ENCODE measurements at regions of chr1 and their contacts with region 1.

Region 1: GRCh38 chr1:236603991-236604904 is at the start of gene HEATR1:
- DNase-seq: peak; percentile 91
- H3K4me3 ChIP-seq: peak within 1 kb of the TSS; percentile 88
- H3K27ac ChIP-seq: peak within 1 kb of the TSS; percentile 8
- H3K4me1 ChIP-seq: peaks cover 14% of the 10 kb centered on the region
- CTCF ChIP-seq: 0 out of 2 replicates have a peak, but pooled peaks have one; percentile 6
- total RNA-seq, gene HEATR1: 30.5 and 34.4 TPM in 2 replicates

Region 2: DNA sequence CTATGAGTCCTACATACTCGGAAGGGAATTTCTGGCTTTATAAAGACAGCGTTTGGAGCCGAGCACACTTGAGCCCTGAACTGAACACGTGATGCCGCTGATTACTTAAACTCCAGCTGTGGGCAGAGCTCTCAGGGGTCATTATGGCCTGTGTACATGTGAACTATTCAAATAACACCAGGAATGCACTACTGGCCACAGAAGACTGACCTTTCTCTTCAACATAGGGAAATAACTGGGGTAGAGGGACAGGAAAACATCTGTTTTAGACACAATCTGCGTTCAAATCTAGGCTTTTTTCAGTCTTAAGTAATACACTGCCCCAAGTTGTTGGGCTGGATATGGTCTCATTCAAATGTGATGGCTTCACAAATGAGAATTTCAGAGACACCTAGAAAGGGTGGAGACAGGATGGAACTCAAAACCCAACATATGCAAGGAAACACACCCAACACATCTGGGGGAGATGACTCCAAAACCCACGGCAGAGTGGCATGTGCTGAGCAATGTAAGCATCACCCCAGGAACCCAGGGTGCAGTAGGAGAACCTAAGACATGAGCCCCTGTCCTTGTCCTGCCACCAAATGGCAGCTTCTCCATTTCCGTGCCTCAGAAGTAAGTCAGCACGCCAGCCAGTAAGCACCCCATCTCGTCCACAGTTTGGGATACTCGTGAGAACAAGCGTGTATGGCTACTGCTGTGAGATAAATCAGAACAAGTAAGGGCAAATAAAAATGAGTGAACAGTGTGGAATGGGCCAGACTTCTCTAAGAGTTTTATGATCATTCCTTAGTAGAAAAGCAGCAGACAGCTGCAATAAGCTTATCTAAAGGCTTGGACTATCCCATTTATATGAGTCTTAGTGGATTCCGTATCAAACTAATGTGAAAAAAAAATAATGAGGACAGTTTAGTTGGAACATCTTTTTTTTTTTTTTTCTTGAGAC is 564.2 kb before region 1 on chr1:
- CTCF ChIA-PET with region 1: no interaction called
- POLR2A ChIA-PET with region 1: no interaction called
- intact Hi-C with region 1: no loop called
- DNase-seq: no peak
- H3K4me3 ChIP-seq: no peak overlapping the region
- H3K27ac ChIP-seq: no peak overlapping the region
- H3K4me1 ChIP-seq: no peaks in the 10 kb centered on the region
- CTCF ChIP-seq: no peak

Region 3: DNA sequence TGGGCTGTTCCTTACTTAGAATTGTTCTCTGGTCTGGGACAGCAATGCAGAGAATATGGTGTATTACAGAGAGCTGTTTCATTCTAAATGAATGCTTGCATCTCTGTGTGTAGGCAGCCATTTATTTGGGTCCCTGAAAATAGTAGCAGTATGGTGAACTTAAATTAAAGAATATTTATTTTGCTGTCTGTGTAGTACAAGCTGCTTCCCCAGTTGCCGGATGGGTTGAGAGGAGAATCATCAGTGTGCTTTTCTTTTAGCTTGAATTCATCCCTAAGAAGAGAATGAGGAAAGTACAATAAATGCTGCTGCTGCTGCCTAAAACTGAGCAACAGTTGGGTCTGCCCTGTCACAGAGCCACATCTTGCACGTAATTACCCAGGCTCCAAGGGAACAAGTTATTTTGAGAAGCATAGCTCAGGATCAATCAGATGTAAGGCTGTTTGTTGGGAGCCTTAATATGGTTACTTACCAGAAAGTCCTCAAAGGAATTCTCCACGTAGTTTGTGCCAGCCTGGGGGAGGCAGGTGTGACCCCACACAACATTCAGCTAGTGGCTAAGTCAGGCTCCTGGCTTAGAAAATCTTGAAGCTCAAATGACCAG is 98.6 kb after region 1 on chr1:
- CTCF ChIA-PET with region 1: no interaction called
- POLR2A ChIA-PET with region 1: interaction called, 12 read pairs
- intact Hi-C with region 1: no loop called
- DNase-seq: no peak
- H3K4me3 ChIP-seq: no peak overlapping the region
- H3K27ac ChIP-seq: no peak overlapping the region
- H3K4me1 ChIP-seq: no peaks in the 10 kb centered on the region
- CTCF ChIP-seq: no peak

Region 4: DNA sequence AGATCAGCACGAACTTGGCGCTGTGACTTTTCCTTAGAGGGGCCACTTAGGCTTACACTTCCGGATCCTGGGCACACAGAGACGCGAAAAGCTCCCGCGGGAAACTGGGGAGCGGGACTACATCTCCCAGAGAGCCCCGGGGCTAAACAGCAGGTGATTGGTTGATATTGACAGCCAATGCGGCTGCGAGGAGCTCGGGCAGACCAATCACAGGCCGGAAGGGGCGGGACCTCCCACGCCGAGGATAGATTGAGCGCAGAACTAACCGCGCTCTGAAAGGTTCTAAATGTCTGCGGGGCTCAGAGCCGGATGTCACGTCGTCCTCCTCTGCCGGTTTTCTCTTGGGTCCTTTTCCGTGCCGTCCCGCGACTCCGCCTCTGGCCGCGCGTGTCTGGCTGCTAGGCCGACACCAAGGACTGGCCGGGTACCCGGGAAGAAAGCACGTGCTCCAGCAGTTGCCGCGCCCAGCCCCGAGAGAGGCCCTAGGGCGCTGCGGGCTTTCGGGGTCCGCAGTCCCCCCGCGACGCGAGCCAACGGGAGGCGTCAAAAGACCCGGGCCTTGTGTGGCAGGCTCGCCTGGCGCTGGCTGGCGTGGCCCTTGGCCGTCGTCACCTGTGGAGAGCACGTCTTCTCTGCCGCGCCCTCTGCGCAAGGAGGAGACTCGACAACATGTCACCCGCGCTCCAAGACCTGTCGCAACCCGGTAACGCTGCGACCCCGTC is 190.9 kb after region 1 on chr1 and contains the start of gene MTR:
- CTCF ChIA-PET with region 1: no interaction called
- POLR2A ChIA-PET with region 1: interaction called, 8 read pairs
- intact Hi-C with region 1: loop called (anchors 1 kb)
- DNase-seq: peak; percentile 98
- H3K4me3 ChIP-seq: peak within 1 kb of the TSS; percentile 99
- H3K27ac ChIP-seq: peak within 1 kb of the TSS; percentile 77
- H3K4me1 ChIP-seq: peaks cover 27% of the 10 kb centered on the region
- CTCF ChIP-seq: no peak
- total RNA-seq, gene MTR: 22.3 and 23.0 TPM in 2 replicates

Region 5: GRCh38 chr1:236868625-236869467 is 264.6 kb after region 1 on chr1:
- CTCF ChIA-PET with region 1: no interaction called
- POLR2A ChIA-PET with region 1: no interaction called
- intact Hi-C with region 1: loop called (anchors 10 kb)
- DNase-seq: peak; percentile 62
- H3K4me3 ChIP-seq: no peak overlapping the region
- H3K27ac ChIP-seq: no peak overlapping the region
- H3K4me1 ChIP-seq: no peaks in the 10 kb centered on the region
- CTCF ChIP-seq: peak; percentile 95

Region 6: GRCh38 chr1:237386362-237387143 is 782.3 kb after region 1 on chr1:
- CTCF ChIA-PET with region 1: no interaction called
- POLR2A ChIA-PET with region 1: no interaction called
- intact Hi-C with region 1: loop called (anchors 10 kb)
- DNase-seq: peak; percentile 49
- H3K4me3 ChIP-seq: no peak overlapping the region
- H3K27ac ChIP-seq: no peak overlapping the region
- H3K4me1 ChIP-seq: no peaks in the 10 kb centered on the region
- CTCF ChIP-seq: peak; percentile 92